Common myeloid progenitor, CD34-positive (primary cell): ENCODE measurements at regions of chr16 and their contacts with region 1.

Region 1: GRCh38 chr16:68356249-68356918 is 45.6 kb downstream of the PRMT7 start:
- DNase-seq: peak; percentile 86 to 96 (median 95)
- H3K4me3 ChIP-seq: peak overlapping the region in 4 of 7 experiments; percentile 28 to 61 (median 47)
- H3K27ac ChIP-seq: no peak overlapping the region
- H3K4me1 ChIP-seq: peaks cover 0 to 49% (median 38%) of the 10 kb centered on the region in 4 experiments
- H3K27me3 ChIP-seq: no peaks in the 10 kb centered on the region

Region 2: GRCh38 chr16:68367030-68367429 is 10.6 kb after region 1 on chr16:
- CTCF ChIA-PET with region 1: interaction called, 48 read pairs
- POLR2A ChIA-PET with region 1: interaction called, 3 read pairs
- DNase-seq: peak; percentile 45 to 66 (median 58)
- H3K4me3 ChIP-seq: no peak overlapping the region
- H3K27ac ChIP-seq: no peak overlapping the region
- H3K4me1 ChIP-seq: peaks cover 6 to 64% (median 41%) of the 10 kb centered on the region in 4 experiments
- H3K27me3 ChIP-seq: peaks cover 0 to 7% (median 0%) of the 10 kb centered on the region in 5 experiments